Calu3 (cell line): ENCODE measurements at regions of chr19 and their contacts with region 1.

Region 1: DNA sequence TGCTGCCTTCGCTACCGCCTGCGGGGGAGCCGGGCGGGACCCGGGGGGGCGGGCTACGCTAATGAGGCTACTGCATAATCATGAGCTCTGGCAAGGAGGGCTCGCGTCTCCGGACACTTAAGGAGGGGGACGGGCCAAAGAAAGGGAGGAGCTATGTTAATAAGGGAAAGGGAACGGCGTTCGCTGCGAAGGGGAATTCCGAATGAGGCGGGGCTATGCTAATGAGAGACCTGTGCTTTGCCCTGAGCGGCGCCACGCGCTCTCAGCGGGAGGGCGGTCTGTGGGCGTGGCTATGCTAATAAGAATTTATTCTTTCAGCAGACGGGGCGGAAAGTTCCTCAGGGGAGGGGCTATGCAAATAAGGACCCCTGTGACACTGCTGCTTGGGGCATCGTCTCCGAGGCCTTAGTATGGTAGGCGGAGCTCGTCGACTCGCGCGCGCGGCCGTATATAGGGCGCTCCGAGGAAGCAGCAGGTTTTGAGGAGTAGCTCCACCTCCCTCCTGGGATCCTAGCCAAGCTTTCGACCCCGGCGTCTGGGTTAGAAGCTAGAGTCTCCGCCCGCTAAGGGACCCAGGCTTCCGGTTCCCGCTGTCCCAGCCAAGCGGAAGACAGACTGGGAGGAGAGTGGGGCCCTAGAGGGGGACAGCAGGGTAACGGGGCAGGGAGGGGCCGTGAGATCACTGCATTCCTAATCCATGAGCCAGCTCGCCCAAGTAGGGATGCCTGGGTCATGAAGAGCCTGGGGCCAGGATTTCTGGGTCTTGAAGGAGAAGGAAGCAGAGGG is at the start of gene RRAS:
- DNase-seq: peak; percentile 100
- H3K4me3 Mint-ChIP-seq: peak within 1 kb of the TSS; percentile 95
- H3K27ac Mint-ChIP-seq: peak within 1 kb of the TSS; percentile 100
- H3K4me1 Mint-ChIP-seq: peaks cover 52% of the 10 kb centered on the region
- H3K27me3 Mint-ChIP-seq: no peaks in the 10 kb centered on the region
- CTCF ChIP-seq: no peak
- total RNA-seq, gene RRAS: 70.4 and 82.2 TPM in 2 replicates

Region 2: GRCh38 chr19:49451430-49452181 is 188.7 kb before region 1 on chr19 and contains the start of gene PIH1D1:
- CTCF ChIA-PET with region 1: no interaction called
- intact Hi-C with region 1: loop called (anchors 5 kb)
- DNase-seq: peak; percentile 97
- H3K4me3 Mint-ChIP-seq: peak within 1 kb of the TSS; percentile 96
- H3K27ac Mint-ChIP-seq: peak within 1 kb of the TSS; percentile 99
- H3K4me1 Mint-ChIP-seq: peaks cover 24% of the 10 kb centered on the region
- H3K27me3 Mint-ChIP-seq: no peaks in the 10 kb centered on the region
- CTCF ChIP-seq: no peak
- total RNA-seq, gene PIH1D1: 127 and 141 TPM in 2 replicates

Region 3: GRCh38 chr19:49590071-49590970 is 50.0 kb before region 1 on chr19:
- CTCF ChIA-PET with region 1: interaction called, 9 read pairs
- intact Hi-C with region 1: loop called (anchors 2 kb)
- DNase-seq: peak; percentile 99
- H3K4me3 Mint-ChIP-seq: peak overlapping the region; percentile 88
- H3K27ac Mint-ChIP-seq: peak overlapping the region; percentile 88
- H3K4me1 Mint-ChIP-seq: peaks cover 36% of the 10 kb centered on the region
- H3K27me3 Mint-ChIP-seq: no peaks in the 10 kb centered on the region
- CTCF ChIP-seq: no peak

Region 4: GRCh38 chr19:49665351-49666119 is 25.2 kb after region 1 on chr19 and contains the starts of genes BCL2L12 and IRF3:
- CTCF ChIA-PET with region 1: interaction called, 3 read pairs
- intact Hi-C with region 1: loop called (anchors 1 kb)
- DNase-seq: peak; percentile 99
- H3K4me3 Mint-ChIP-seq: peak within 1 kb of the TSS; percentile 83
- H3K27ac Mint-ChIP-seq: peak within 1 kb of the TSS; percentile 77
- H3K4me1 Mint-ChIP-seq: peaks cover 13% of the 10 kb centered on the region
- H3K27me3 Mint-ChIP-seq: no peaks in the 10 kb centered on the region
- CTCF ChIP-seq: no peak
- total RNA-seq, gene BCL2L12: 66.5 and 70.8 TPM in 2 replicates
- total RNA-seq, gene IRF3: 189 and 191 TPM in 2 replicates

Region 5: GRCh38 chr19:49676690-49677231 is 36.5 kb after region 1 on chr19:
- CTCF ChIA-PET with region 1: interaction called, 22 read pairs
- intact Hi-C with region 1: no loop called
- DNase-seq: peak; percentile 99
- H3K4me3 Mint-ChIP-seq: peak overlapping the region; percentile 89
- H3K27ac Mint-ChIP-seq: peak overlapping the region; percentile 99
- H3K4me1 Mint-ChIP-seq: peaks cover 29% of the 10 kb centered on the region
- H3K27me3 Mint-ChIP-seq: no peaks in the 10 kb centered on the region
- CTCF ChIP-seq: no peak